ENCODE measurements at regions of chr18 and their contacts with region 1.

Region 1: DNA sequence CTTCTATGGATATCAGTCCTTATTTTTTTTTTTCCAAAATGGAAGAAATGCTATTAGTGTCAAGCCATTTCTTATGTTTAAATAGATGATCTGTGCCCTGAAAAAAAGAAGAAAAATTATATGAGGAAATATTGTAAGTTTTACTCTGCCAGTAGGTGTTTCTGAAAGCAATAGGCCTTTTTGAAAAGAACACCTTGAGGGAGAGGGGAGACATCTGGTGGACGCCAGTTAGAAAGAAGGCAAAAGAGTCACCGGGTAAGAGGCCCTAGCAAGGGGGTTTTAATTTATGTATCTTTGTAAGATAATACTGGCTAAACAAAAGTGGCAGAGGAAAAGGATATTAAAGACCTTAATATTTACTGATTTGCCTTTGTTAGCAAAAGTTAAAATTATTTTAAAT is 56.1 kb downstream of the DYNAP start:
- DNase-seq: no peak
- ATAC-seq: peak; percentile 48; the same call in 1 of the 3 replicates
- H3K4me3 ChIP-seq: no peak overlapping the region
- H3K27ac ChIP-seq: no peak overlapping the region
- H3K4me1 ChIP-seq: no peaks in the 10 kb centered on the region
- H3K27me3 ChIP-seq: no peaks in the 10 kb centered on the region
- CTCF ChIP-seq: peak; percentile 22 to 37 (median 32); a peak in 4 of 6 replicates
- EP300 ChIP-seq: no peak
- POLR2A ChIP-seq: no peak
- RAD21 ChIP-seq: peak; percentile 56

Region 2: GRCh38 chr18:54181856-54182602 is 465.1 kb before region 1 on chr18:
- CTCF ChIA-PET with region 1: no interaction called
- POLR2A ChIA-PET with region 1: no interaction called
- RAD21 ChIA-PET with region 1: no interaction called
- SMC1A ChIA-PET with region 1: no interaction called
- in situ Hi-C with region 1: no loop called
- intact Hi-C with region 1: no loop called
- DNase-seq: no peak
- ATAC-seq: peak; percentile 73
- H3K4me3 ChIP-seq: no peak overlapping the region
- H3K27ac ChIP-seq: peak overlapping the region; percentile 9
- H3K4me1 ChIP-seq: peaks cover 24% of the 10 kb centered on the region
- H3K27me3 ChIP-seq: no peaks in the 10 kb centered on the region
- CTCF ChIP-seq: no peak
- EP300 ChIP-seq: no peak
- POLR2A ChIP-seq: no peak
- RAD21 ChIP-seq: no peak

Region 3: DNA sequence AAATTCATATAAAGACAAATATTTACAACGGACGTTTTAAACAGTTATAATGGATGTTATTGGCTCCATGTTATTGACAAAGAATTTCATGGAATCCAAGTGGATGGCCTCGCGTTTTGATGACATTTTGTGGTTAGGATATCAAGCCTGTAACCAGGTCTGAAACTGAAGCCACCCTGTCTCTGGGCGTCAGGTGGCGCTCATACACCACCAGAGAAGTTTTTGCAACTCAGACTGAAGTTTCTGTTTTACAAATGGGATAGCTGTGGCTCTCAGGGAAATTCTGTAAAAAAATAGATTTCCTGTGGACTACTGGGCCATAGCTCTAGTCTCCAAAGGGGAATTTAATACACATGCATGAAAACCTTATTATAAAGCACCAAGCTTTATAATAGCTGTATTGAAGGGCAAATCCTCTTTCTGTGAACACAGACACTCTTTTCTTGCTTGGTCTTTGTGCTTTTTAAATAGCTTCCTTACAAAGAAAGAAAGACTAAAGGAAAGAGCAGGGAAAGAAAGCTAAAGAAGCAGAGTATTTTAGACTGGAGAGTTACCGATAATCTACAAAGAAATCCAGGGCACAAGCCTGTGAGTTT is 202.8 kb before region 1 on chr18:
- CTCF ChIA-PET with region 1: no interaction called
- POLR2A ChIA-PET with region 1: no interaction called
- RAD21 ChIA-PET with region 1: no interaction called
- SMC1A ChIA-PET with region 1: no interaction called
- in situ Hi-C with region 1: no loop called
- intact Hi-C with region 1: loop called (anchors 1 kb)
- DNase-seq: no peak
- ATAC-seq: peak; percentile 86
- H3K4me3 ChIP-seq: no peak overlapping the region
- H3K27ac ChIP-seq: no peak overlapping the region
- H3K4me1 ChIP-seq: no peaks in the 10 kb centered on the region
- H3K27me3 ChIP-seq: peaks cover 0 to 3% of the 10 kb centered on the region in 2 experiments; a peak in 2 of 4 replicates
- CTCF ChIP-seq: peak; percentile 67 to 87 (median 76)
- EP300 ChIP-seq: no peak
- POLR2A ChIP-seq: no peak
- RAD21 ChIP-seq: peak; percentile 91

Measured in GM12878 (cell line).